CD8-positive, alpha-beta T cell (primary cell): ENCODE measurements at regions of chr19 and their contacts with region 1.

Region 1: GRCh38 chr19:46766569-46767317 is 20.5 kb upstream of the STRN4 start:
- DNase-seq: peak in 6 of 9 experiments; percentile 55 to 76 (median 68)
- ATAC-seq: peak; percentile 80
- H3K4me3 ChIP-seq: no peak overlapping the region
- H3K4me3 Mint-ChIP-seq: no peak overlapping the region
- H3K27ac ChIP-seq: no peak overlapping the region
- H3K27ac Mint-ChIP-seq: no peak overlapping the region
- H3K4me1 ChIP-seq: no peaks in the 10 kb centered on the region
- H3K4me1 Mint-ChIP-seq: peaks cover 2% of the 10 kb centered on the region
- H3K27me3 ChIP-seq: no peaks in the 10 kb centered on the region
- H3K27me3 Mint-ChIP-seq: no peaks in the 10 kb centered on the region
- CTCF ChIP-seq: peak; percentile 57

Region 2: DNA sequence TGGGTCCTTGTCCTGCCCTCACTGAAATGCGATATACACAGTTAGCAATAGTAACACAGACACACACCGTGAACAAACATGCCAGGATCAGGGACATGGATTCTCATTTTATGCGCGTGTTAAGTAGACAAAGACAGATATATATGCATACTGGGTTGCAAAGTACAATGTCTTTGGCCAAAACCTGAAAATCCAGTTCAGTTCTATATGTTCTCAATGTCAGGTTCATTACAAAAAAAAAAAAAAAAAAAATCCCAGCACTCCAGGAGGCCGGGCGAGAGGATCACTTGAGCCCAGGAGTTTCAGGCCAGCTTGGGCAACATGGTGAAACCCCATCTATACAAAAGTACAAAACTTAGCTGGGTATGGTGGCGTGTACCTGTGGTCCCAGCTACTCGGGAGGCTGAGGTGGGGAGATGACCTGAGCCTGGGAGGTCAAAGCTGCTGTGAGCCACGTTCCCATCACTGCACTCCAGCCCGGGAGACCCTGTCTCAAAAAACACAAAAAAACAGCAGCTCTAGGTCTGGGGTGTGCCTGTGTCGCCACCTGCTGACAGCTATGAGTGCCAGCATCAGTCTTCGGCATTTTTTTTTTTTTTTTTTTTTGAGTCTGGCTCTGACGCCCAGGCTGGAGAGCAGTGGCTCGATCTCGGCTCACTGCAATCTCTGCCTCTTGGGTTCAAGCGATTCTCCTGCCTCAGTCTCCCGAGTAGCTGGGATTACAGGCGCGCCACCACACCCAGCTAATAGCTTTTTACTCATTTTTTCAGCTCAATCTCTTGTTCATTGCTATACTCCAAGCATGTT is 73.6 kb after region 1 on chr19:
- CTCF ChIA-PET with region 1: interaction called, 34 read pairs
- POLR2A ChIA-PET with region 1: no interaction called
- intact Hi-C with region 1: no loop called
- DNase-seq: peak in 6 of 9 experiments; percentile 52 to 83 (median 62)
- ATAC-seq: peak; percentile 95
- H3K4me3 ChIP-seq: no peak overlapping the region
- H3K4me3 Mint-ChIP-seq: no peak overlapping the region
- H3K27ac ChIP-seq: no peak overlapping the region
- H3K27ac Mint-ChIP-seq: no peak overlapping the region
- H3K4me1 ChIP-seq: no peaks in the 10 kb centered on the region
- H3K4me1 Mint-ChIP-seq: no peaks in the 10 kb centered on the region
- H3K27me3 ChIP-seq: no peaks in the 10 kb centered on the region
- H3K27me3 Mint-ChIP-seq: no peaks in the 10 kb centered on the region
- CTCF ChIP-seq: peak; percentile 77